ENCODE measurements at regions of chr17 and their contacts with region 1.

Region 1: DNA sequence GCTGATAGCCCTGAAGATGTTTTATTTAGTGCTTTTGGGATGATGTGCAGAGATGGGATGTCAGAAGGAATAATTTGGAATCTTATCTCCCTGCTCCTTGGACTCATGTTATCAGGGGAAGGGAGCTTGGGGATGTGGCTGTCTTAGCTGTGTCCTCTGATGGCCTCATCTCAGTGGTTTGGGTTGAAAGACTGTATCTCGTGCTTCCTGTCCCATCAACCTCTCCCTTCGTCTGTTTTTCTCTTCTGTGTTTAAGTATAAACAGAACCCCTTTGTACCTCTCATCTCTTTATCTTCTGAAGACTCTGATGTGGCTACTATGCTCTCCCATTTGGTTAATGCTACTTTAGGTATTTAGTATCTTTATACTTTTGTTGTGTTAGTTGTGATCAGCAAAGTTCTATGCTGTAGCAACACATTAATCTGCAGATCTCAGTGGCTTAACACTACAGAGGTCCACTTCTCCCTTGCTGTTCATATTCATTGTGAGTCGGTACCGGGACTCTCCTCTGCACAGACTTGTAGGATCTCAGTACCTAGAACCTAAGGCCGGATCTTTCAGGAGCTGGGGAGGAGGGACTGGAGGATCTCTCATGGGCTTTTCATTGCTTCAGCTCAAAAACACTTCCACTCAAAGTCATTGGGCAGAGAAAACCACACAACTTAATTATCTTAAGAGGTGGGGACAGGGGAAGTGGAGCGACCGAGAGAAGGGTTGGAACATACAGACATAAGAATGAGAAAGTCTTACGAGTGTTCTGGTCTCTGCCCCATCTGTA is 28.8 kb downstream of the PRKCA start:
- DNase-seq: peak in 8 of 9 experiments; percentile 7 to 80 (median 34)
- ATAC-seq: peak; percentile 74
- H3K4me3 ChIP-seq: peak overlapping the region; percentile 15 to 21
- H3K4me3 Mint-ChIP-seq: peak overlapping the region; percentile 81
- H3K27ac ChIP-seq: peak overlapping the region; percentile 42 to 55
- H3K27ac Mint-ChIP-seq: peak overlapping the region; percentile 95
- H3K4me1 ChIP-seq: peaks cover 82% of the 10 kb centered on the region
- H3K4me1 Mint-ChIP-seq: peaks cover 82% of the 10 kb centered on the region
- H3K27me3 ChIP-seq: no peaks in the 10 kb centered on the region
- H3K27me3 Mint-ChIP-seq: no peaks in the 10 kb centered on the region
- CTCF ChIP-seq: no peak

Region 2: GRCh38 chr17:66135896-66136295 is 195.3 kb before region 1 on chr17:
- CTCF ChIA-PET with region 1: no interaction called
- POLR2A ChIA-PET with region 1: no interaction called
- intact Hi-C with region 1: no loop called
- DNase-seq: no peak
- ATAC-seq: no peak
- H3K4me3 ChIP-seq: no peak overlapping the region
- H3K4me3 Mint-ChIP-seq: no peak overlapping the region
- H3K27ac ChIP-seq: no peak overlapping the region
- H3K27ac Mint-ChIP-seq: no peak overlapping the region
- H3K4me1 ChIP-seq: no peaks in the 10 kb centered on the region
- H3K4me1 Mint-ChIP-seq: no peaks in the 10 kb centered on the region
- H3K27me3 ChIP-seq: no peaks in the 10 kb centered on the region
- H3K27me3 Mint-ChIP-seq: no peaks in the 10 kb centered on the region
- CTCF ChIP-seq: no peak

Region 3: DNA sequence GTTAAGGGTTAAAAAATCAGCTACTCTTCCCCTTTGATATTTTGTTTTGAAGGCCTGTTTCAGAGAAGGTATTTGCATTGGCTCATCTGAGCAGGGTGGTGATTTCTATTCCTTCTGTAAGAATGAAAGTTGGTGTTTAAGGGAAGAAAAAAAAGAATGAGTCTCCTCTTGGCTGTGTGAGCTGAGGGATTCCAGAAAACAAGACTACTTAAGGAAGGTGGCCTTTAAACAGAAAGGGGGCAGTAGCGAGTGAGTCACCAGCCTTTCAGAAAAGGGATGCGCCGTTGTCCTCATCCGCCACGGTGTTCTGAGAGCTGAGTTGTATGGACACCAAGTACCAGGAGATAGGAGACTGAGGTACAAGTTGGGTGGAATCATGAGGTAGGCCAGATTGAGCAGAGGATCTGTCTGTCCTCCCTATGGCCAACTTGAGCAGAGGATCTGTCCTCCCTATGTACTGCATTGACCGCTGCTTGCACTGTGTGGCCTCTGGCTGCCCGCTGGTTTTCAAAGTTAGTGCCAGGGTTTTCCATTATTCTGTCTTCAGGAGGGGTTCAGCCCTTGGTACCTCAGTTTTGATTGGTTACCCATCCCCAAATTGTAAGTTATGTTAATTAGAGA is 20.6 kb before region 1 on chr17:
- CTCF ChIA-PET with region 1: interaction called, 3 read pairs
- POLR2A ChIA-PET with region 1: interaction called, 13 read pairs
- intact Hi-C with region 1: loop called in 1 of 2 experiments (anchors 2 kb)
- DNase-seq: peak in 2 of 9 experiments; percentile 20 to 37
- ATAC-seq: no peak
- H3K4me3 ChIP-seq: no peak overlapping the region
- H3K4me3 Mint-ChIP-seq: no peak overlapping the region
- H3K27ac ChIP-seq: no peak overlapping the region
- H3K27ac Mint-ChIP-seq: peak overlapping the region; percentile 69
- H3K4me1 ChIP-seq: peaks cover 78% of the 10 kb centered on the region
- H3K4me1 Mint-ChIP-seq: peaks cover 89% of the 10 kb centered on the region
- H3K27me3 ChIP-seq: no peaks in the 10 kb centered on the region
- H3K27me3 Mint-ChIP-seq: no peaks in the 10 kb centered on the region
- CTCF ChIP-seq: no peak

Region 4: DNA sequence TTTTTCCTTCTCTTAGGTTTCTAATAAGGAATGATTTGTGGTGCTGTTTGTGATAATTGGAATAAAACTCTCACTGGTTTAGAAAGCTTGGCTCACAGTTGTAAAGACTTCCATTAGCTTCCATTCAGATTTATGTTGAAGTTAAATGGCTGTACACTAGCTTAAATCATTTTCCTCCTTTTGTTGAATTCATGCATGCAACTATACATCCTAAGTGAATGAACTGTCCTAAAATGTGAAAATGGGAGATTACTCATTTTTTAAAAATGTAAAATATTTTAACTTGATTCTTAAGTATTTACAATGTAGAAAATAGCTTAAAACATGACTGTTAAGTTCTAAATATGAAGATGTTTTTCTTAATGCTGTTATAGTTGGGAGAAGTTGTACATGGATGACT is 13.6 kb before region 1 on chr17:
- CTCF ChIA-PET with region 1: interaction called, 3 read pairs
- POLR2A ChIA-PET with region 1: interaction called, 13 read pairs
- intact Hi-C with region 1: no loop called
- DNase-seq: no peak
- ATAC-seq: no peak
- H3K4me3 ChIP-seq: no peak overlapping the region
- H3K4me3 Mint-ChIP-seq: no peak overlapping the region
- H3K27ac ChIP-seq: no peak overlapping the region
- H3K27ac Mint-ChIP-seq: no peak overlapping the region
- H3K4me1 ChIP-seq: peaks cover 25% of the 10 kb centered on the region
- H3K4me1 Mint-ChIP-seq: peaks cover 53% of the 10 kb centered on the region
- H3K27me3 ChIP-seq: no peaks in the 10 kb centered on the region
- H3K27me3 Mint-ChIP-seq: no peaks in the 10 kb centered on the region
- CTCF ChIP-seq: no peak

Region 5: DNA sequence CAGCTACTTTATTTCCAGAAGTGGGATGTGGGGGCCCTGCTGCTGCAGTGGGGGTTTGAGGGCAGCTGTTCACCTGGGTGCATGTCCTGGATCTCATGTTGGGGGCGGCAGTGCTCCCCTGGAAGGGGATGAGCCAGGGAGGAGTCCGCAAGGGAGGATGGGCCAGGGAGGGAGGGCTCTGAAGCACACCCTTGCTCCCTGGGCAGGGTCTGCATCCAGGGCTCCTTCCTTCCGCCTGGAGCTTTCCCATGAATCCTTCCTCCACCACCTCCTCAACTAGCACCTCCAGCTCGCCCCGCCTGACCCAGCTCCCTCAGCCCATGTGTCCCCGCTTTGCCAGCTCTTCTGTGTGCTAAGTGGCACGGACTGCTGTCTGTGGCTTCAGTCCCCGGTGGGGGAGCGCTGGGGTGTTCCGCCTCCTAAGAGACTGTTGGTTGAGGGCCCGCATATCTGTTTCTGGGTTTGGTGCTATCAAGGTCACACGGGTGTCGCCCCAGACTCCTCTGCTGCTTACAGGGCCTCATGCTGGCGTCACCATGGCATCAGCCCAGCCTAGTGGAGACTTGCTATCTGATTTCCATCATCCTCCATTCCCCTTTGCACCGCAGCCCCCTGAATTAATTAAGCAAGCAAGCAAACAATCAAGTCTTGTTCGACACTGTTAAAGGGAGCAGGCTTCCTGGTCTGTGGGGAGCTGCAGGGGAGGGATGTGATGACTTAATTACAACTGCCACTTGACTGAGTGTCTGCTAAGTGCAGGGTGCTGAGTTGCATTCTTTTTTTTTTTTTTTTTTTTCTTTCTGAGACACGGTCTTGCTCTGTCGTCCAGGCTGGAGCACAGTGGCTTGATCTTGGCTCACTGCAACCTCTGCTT is 43.0 kb after region 1 on chr17:
- CTCF ChIA-PET with region 1: no interaction called
- POLR2A ChIA-PET with region 1: interaction called, 4 read pairs
- intact Hi-C with region 1: loop called in 1 of 2 experiments (anchors 5 kb)
- DNase-seq: peak; percentile 46 to 85 (median 73)
- ATAC-seq: peak; percentile 90
- H3K4me3 ChIP-seq: no peak overlapping the region
- H3K4me3 Mint-ChIP-seq: peak overlapping the region; percentile 51
- H3K27ac ChIP-seq: peak overlapping the region; percentile 19 to 41
- H3K27ac Mint-ChIP-seq: peak overlapping the region; percentile 91
- H3K4me1 ChIP-seq: peaks cover 31% of the 10 kb centered on the region
- H3K4me1 Mint-ChIP-seq: peaks cover 62% of the 10 kb centered on the region
- H3K27me3 ChIP-seq: no peaks in the 10 kb centered on the region
- H3K27me3 Mint-ChIP-seq: no peaks in the 10 kb centered on the region
- CTCF ChIP-seq: no peak

Region 6: DNA sequence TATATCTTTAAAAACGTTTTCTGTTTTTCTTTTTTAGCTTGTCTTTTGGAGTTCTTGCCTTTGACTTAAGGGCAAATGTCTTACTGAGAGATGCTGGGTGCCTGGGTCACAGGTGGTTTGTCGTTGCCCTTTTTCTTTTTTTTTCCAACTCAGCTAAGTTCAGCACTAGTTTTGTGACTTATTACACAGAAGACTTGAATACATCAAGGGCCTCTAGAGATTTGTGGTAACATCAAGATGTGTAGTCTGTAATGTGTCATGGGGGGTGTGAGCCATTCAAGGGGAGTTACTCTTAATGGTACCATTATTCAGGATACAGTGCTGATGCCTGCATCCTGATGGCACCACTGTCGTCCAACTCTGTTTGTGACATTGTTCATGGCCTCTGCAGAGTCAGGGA is 66.3 kb after region 1 on chr17:
- CTCF ChIA-PET with region 1: interaction called, 3 read pairs
- POLR2A ChIA-PET with region 1: interaction called, 4 read pairs
- intact Hi-C with region 1: loop called (anchors 2 to 5 kb)
- DNase-seq: peak in 2 of 9 experiments; percentile 22 to 32
- ATAC-seq: peak; percentile 30
- H3K4me3 ChIP-seq: no peak overlapping the region
- H3K4me3 Mint-ChIP-seq: peak overlapping the region; percentile 33
- H3K27ac ChIP-seq: peak overlapping the region in 1 of 2 experiments; percentile 37
- H3K27ac Mint-ChIP-seq: peak overlapping the region; percentile 90
- H3K4me1 ChIP-seq: peaks cover 87% of the 10 kb centered on the region
- H3K4me1 Mint-ChIP-seq: peaks cover 77% of the 10 kb centered on the region
- H3K27me3 ChIP-seq: no peaks in the 10 kb centered on the region
- H3K27me3 Mint-ChIP-seq: no peaks in the 10 kb centered on the region
- CTCF ChIP-seq: no peak